HepG2 (cell line): ENCODE measurements at regions of chr4 and their contacts with region 1.

Region 1: DNA sequence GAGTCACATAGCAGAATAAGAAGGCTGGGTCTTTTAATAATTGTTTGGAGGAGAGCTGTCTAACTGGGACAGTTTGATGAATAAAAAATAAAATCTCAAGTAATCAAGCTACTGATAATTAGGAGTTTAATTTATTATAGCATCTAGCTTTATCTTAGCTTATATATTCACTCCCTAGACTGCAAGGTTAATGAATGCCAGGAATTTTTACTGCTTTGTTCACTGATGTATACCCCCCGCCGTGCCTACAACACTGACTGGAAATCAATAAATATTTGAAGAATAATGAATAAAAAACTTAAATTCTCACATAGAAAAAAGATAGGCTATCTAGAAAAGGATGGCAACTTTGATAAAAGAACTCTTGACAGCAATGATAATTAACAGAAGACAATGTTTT is 59.7 kb downstream of the IQCM start:
- DNase-seq: no peak
- ATAC-seq: no peak
- H3K4me3 ChIP-seq: no peak overlapping the region
- H3K27ac ChIP-seq: no peak overlapping the region
- H3K4me1 ChIP-seq: no peaks in the 10 kb centered on the region
- H3K27me3 ChIP-seq: no peaks in the 10 kb centered on the region
- CTCF ChIP-seq: no peak
- EP300 ChIP-seq: no peak
- POLR2A ChIP-seq: no peak
- RAD21 ChIP-seq: no peak

Region 2: GRCh38 chr4:149801416-149801815 is 45.4 kb after region 1 on chr4:
- CTCF ChIA-PET with region 1: no interaction called
- POLR2A ChIA-PET with region 1: no interaction called
- in situ Hi-C with region 1: no loop called
- intact Hi-C with region 1: loop called (anchors 5 kb)
- DNase-seq: no peak
- ATAC-seq: no peak
- H3K4me3 ChIP-seq: no peak overlapping the region
- H3K27ac ChIP-seq: no peak overlapping the region
- H3K4me1 ChIP-seq: no peaks in the 10 kb centered on the region
- H3K27me3 ChIP-seq: no peaks in the 10 kb centered on the region
- CTCF ChIP-seq: no peak
- EP300 ChIP-seq: no peak
- POLR2A ChIP-seq: no peak
- RAD21 ChIP-seq: no peak